Dorsolateral prefrontal cortex (tissue), 120 donors: ENCODE measurements at regions of chr12 and their contacts with region 1.

Region 1: GRCh38 chr12:80269803-80270552 is 170.6 kb downstream of the OTOGL start:
- DNase-seq: no peak
- H3K4me3 ChIP-seq: peak overlapping the region in 1 of 59 donors; percentile 14
- H3K27ac ChIP-seq: peak overlapping the region in 1 of 59 donors; percentile 23
- H3K27me3 ChIP-seq: no peaks in the 10 kb centered on the region
- CTCF ChIP-seq: peak; percentile 59 to 88 (median 74)

Region 2: GRCh38 chr12:79547735-79548609 is 722.0 kb before region 1 on chr12:
- intact Hi-C with region 1: loop called (anchors 5 to 10 kb)
- DNase-seq: peak in 4 of 10 donors; percentile 17 to 52 (median 34)
- H3K4me3 ChIP-seq: no peak overlapping the region
- H3K27ac ChIP-seq: peak overlapping the region in 14 of 59 donors; percentile 2 to 71 (median 41)
- H3K27me3 ChIP-seq: no peaks in the 10 kb centered on the region
- CTCF ChIP-seq: peak; percentile 47 to 83 (median 73)

Region 3: DNA sequence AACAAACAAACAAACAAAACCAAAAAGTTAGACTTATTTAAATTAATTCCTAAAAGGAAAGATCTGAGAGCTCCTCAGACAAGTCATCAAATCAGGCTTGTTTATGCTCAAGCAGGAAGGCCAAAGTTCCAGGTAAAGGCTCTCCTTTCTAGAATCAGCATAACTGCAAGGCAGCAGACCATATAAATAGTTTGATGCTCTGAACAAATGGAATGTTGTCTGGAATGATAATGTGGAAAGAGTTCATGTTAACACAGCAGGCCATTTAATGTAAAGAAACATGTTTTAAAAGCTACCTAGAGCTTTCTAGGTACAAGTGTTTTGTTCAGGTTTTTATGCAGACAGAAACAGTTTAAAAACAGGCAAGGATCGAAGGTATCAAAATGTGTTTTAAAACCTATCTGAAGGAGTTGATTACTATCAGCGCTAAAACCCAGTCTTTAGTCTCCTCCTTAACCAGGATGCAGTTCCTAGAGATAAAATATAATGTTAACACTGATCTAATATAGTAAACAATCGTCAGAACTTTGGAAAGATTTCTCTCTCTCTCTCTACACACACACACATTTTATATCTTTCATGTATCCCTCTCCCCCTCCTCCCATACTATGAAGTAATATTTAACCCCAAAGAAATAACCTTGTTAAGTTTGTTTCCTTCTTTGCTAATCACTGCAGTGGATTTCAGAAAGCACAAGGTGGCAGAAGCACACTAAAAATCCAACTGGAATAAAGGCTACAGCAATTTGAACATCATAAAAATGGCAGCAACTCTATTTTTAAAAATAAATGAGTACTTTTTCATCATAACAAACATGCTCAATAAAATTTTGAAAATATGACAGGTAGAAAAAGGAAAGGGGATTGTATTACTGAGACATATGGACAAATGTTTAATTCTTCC is 714.7 kb before region 1 on chr12:
- intact Hi-C with region 1: loop called (anchors 5 to 10 kb)
- DNase-seq: no peak
- H3K4me3 ChIP-seq: no peak overlapping the region
- H3K27ac ChIP-seq: peak overlapping the region in 1 of 59 donors; percentile 33
- H3K27me3 ChIP-seq: no peaks in the 10 kb centered on the region
- CTCF ChIP-seq: peak; percentile 40 to 74 (median 57)

Region 4: GRCh38 chr12:79560225-79560889 is 709.6 kb before region 1 on chr12:
- intact Hi-C with region 1: loop called (anchors 5 to 10 kb)
- DNase-seq: no peak
- H3K4me3 ChIP-seq: no peak overlapping the region
- H3K27ac ChIP-seq: peak overlapping the region in 1 of 59 donors; percentile 19
- H3K27me3 ChIP-seq: peaks cover 0 to 3% (median 0%) of the 10 kb centered on the region in 45 donors
- CTCF ChIP-seq: no peak

Region 5: GRCh38 chr12:80192087-80192486 is 77.9 kb before region 1 on chr12:
- intact Hi-C with region 1: loop called in 1 of 2 experiments (anchors 5 kb)
- DNase-seq: no peak
- H3K4me3 ChIP-seq: no peak overlapping the region
- H3K27ac ChIP-seq: peak overlapping the region in 30 of 59 donors; percentile 2 to 72 (median 44)
- H3K27me3 ChIP-seq: no peaks in the 10 kb centered on the region
- CTCF ChIP-seq: no peak